Psoas muscle (tissue), 8 donors: ENCODE measurements at regions of chr1 and their contacts with region 1.

Region 1: DNA sequence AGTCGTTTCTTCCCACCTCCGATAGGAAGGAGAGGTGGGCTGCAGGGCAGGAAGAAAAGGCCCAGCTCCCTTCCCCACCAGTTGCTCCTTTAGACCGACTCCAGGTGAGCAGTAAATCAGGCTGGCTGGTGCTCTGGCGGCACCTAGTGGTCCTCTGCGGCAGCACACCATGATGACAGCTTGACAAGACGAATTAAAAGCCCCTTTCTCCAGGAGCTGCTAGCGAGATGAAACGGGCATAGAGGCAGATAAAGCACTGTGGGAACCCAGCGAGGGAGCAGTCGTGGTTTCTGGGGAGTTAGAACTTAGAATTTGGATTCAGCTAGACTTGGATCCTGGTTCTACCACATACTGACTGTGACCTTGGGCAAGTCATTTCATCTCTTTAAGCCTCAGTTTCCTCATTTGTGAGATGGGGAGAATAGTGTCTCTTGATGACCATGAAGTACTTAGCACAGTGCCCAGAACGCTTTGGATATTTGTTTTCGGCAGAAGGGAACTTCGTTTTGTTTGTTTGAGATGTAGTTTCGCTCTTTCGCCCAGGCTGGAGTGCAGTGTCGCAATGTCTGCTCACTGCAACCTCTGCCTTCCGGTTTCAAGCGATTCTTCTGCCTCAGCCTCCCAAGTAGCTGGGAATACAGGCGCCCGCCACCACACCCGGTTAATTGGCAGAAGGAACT is 21.8 kb upstream of the COL9A2 start:
- DNase-seq: peak; percentile 78 to 87
- ATAC-seq: peak; percentile 71 to 94 (median 89)
- H3K4me3 ChIP-seq: no peak overlapping the region
- H3K27ac ChIP-seq: no peak overlapping the region
- H3K4me1 ChIP-seq: no peaks in the 10 kb centered on the region
- H3K27me3 ChIP-seq: peaks cover 0 to 7% (median 3%) of the 10 kb centered on the region in 3 donors
- CTCF ChIP-seq: peak; percentile 98

Region 2: GRCh38 chr1:40079774-40080400 is 259.0 kb before region 1 on chr1:
- intact Hi-C with region 1: loop called in 1 of 2 experiments (anchors 5 kb)
- DNase-seq: no peak
- ATAC-seq: no peak
- H3K4me3 ChIP-seq: no peak overlapping the region
- H3K27ac ChIP-seq: no peak overlapping the region
- H3K4me1 ChIP-seq: no peaks in the 10 kb centered on the region
- H3K27me3 ChIP-seq: no peaks in the 10 kb centered on the region
- CTCF ChIP-seq: no peak

Region 3: DNA sequence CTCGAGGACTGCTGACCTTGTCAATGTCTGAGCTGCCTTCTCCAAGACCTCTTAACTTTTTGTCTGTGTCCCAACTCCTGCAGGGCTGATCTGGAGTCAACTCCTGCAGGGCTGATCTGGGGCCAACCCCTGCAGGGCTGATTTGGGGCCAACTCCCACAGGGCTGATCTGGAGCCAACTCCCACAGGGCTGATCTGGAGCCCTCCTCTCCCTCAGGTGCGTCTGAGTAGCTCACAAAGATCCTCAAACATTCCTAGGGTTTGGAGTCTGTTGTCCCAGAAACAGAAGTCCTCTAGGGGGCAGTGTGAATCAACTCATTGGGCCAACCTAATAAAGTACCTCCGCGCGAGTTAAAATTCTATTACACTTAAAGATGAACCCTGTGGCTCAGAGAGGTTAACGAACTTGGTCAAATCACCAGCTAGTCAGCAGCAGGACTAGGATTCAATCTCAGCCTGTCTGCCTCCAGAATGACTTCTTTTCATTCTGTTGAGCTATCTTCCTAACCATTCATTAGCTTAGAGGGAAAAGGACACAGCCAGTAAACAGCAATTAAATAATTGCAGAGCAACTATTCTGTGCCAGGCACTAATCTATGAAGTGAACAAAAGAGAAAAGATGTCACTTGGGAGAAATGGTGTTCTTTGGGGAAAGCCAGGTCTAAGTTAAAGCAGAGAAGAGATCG is 194.9 kb before region 1 on chr1:
- intact Hi-C with region 1: loop called (anchors 2 to 5 kb)
- DNase-seq: no peak
- ATAC-seq: peak; percentile 61 to 88 (median 80)
- H3K4me3 ChIP-seq: no peak overlapping the region
- H3K27ac ChIP-seq: no peak overlapping the region
- H3K4me1 ChIP-seq: no peaks in the 10 kb centered on the region
- H3K27me3 ChIP-seq: peaks cover 0 to 28% (median 3%) of the 10 kb centered on the region in 3 donors
- CTCF ChIP-seq: peak; percentile 72

Region 4: GRCh38 chr1:40153073-40153770 is 185.7 kb before region 1 on chr1:
- intact Hi-C with region 1: loop called (anchors 2 to 5 kb)
- DNase-seq: no peak
- ATAC-seq: peak in 2 of 4 donors; percentile 54 to 79
- H3K4me3 ChIP-seq: no peak overlapping the region
- H3K27ac ChIP-seq: no peak overlapping the region
- H3K4me1 ChIP-seq: no peaks in the 10 kb centered on the region
- H3K27me3 ChIP-seq: no peaks in the 10 kb centered on the region
- CTCF ChIP-seq: peak; percentile 76

Region 5: GRCh38 chr1:40404670-40405462 is 66.0 kb after region 1 on chr1:
- intact Hi-C with region 1: loop called (anchors 5 kb)
- DNase-seq: no peak
- ATAC-seq: peak in 2 of 4 donors; percentile 67 to 77
- H3K4me3 ChIP-seq: peak overlapping the region; percentile 13
- H3K27ac ChIP-seq: no peak overlapping the region
- H3K4me1 ChIP-seq: no peaks in the 10 kb centered on the region
- H3K27me3 ChIP-seq: no peaks in the 10 kb centered on the region
- CTCF ChIP-seq: peak; percentile 88